ENCODE measurements at regions of chr5 and their contacts with region 1.

Region 1: GRCh38 chr5:132265336-132266030 is 8.0 kb downstream of the PDLIM4 start:
- DNase-seq: peak in 1 of 2 donors; percentile 92
- H3K4me3 ChIP-seq: no peak overlapping the region
- H3K27ac ChIP-seq: peak overlapping the region; percentile 94 to 98
- H3K4me1 ChIP-seq: peaks cover 19 to 47% of the 10 kb centered on the region in 2 donors
- H3K27me3 ChIP-seq: no peaks in the 10 kb centered on the region
- CTCF ChIP-seq: no peak

Region 2: DNA sequence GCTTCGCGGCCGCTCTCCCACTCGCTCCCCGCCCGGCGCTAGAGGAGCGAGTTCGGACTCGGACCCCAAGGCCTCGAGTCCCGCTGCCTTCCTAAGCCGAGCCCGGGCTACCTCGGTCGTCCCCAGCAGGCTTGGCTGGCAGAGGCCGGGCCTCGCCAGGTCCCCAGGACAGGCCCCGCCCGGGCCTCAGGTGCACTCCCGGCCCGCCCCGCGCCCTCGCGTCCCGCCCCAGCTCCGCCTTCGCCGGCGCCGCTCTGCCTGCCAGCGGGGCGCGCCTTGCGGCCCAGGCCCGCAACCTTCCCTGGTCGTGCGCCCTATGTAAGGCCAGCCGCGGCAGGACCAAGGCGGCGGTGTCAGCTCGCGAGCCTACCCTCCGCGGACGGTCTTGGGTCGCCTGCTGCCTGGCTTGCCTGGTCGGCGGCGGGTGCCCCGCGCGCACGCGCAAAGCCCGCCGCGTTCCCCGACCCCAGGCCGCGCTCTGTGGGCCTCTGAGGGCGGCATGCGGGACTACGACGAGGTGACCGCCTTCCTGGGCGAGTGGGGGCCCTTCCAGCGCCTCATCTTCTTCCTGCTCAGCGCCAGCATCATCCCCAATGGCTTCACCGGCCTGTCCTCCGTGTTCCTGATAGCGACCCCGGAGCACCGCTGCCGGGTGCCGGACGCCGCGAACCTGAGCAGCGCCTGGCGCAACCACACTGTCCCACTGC is 104.1 kb after region 1 on chr5 and contains the start of gene SLC22A5:
- intact Hi-C with region 1: loop called (anchors 5 kb)
- DNase-seq: peak in 1 of 2 donors; percentile 82
- H3K4me3 ChIP-seq: peak within 1 kb of the TSS; percentile 75 to 79
- H3K27ac ChIP-seq: peak within 1 kb of the TSS; percentile 84 to 93
- H3K4me1 ChIP-seq: peaks cover 5 to 22% of the 10 kb centered on the region in 2 donors
- H3K27me3 ChIP-seq: no peaks in the 10 kb centered on the region
- CTCF ChIP-seq: no peak
- total RNA-seq, gene SLC22A5: 11.9 TPM

Region 3: GRCh38 chr5:132394667-132395259 is 129.3 kb after region 1 on chr5:
- intact Hi-C with region 1: no loop called
- DNase-seq: no peak
- H3K4me3 ChIP-seq: no peak overlapping the region
- H3K27ac ChIP-seq: no peak overlapping the region
- H3K4me1 ChIP-seq: peaks cover 0 to 5% of the 10 kb centered on the region in 2 donors
- H3K27me3 ChIP-seq: no peaks in the 10 kb centered on the region
- CTCF ChIP-seq: no peak

Measured in ascending aorta (tissue), 2 donors.